ENCODE measurements at regions of chr3 and their contacts with region 1.

Region 1: GRCh38 chr3:132245552-132246142 is 71.6 kb upstream of the ACP3 start:
- DNase-seq: no peak
- ATAC-seq: no peak
- H3K4me3 ChIP-seq: no peak overlapping the region
- H3K27ac ChIP-seq: no peak overlapping the region
- H3K4me1 ChIP-seq: peaks cover 0 to 6% (median 0%) of the 10 kb centered on the region in 9 donors
- H3K27me3 ChIP-seq: peaks cover 0 to 10% (median 5%) of the 10 kb centered on the region in 7 donors
- CTCF ChIP-seq: no peak

Region 2: GRCh38 chr3:130787422-130788068 is 1458.1 kb before region 1 on chr3:
- intact Hi-C with region 1: no loop called
- DNase-seq: no peak
- ATAC-seq: no peak
- H3K4me3 ChIP-seq: no peak overlapping the region
- H3K27ac ChIP-seq: no peak overlapping the region
- H3K4me1 ChIP-seq: peaks cover 0 to 9% (median 0%) of the 10 kb centered on the region in 9 donors
- H3K27me3 ChIP-seq: no peaks in the 10 kb centered on the region
- CTCF ChIP-seq: no peak

Region 3: GRCh38 chr3:132164469-132165092 is 81.1 kb before region 1 on chr3:
- intact Hi-C with region 1: no loop called
- DNase-seq: no peak
- ATAC-seq: no peak
- H3K4me3 ChIP-seq: no peak overlapping the region
- H3K27ac ChIP-seq: no peak overlapping the region
- H3K4me1 ChIP-seq: no peaks in the 10 kb centered on the region
- H3K27me3 ChIP-seq: no peaks in the 10 kb centered on the region
- CTCF ChIP-seq: no peak

Region 4: DNA sequence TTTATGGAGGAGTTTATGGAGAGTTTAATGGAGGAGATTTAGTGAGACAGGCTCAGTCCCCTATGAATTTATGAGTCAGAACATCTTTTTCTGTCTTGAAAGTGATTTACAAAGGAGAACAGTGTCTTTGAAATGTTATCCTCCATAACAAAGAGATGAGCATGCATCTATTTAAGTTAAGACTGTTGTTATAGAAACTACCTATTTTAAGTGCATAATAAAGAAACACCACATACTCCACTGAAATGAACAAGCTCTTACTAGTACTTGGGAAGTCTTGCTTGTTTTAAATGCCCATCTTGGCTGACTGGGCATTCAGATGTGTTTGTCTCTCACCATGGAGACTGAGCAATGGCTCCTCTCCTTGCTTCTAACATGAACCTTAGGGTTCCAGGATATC is 47.1 kb before region 1 on chr3:
- intact Hi-C with region 1: no loop called
- DNase-seq: no peak
- ATAC-seq: no peak
- H3K4me3 ChIP-seq: no peak overlapping the region
- H3K27ac ChIP-seq: no peak overlapping the region
- H3K4me1 ChIP-seq: no peaks in the 10 kb centered on the region
- H3K27me3 ChIP-seq: no peaks in the 10 kb centered on the region
- CTCF ChIP-seq: no peak

Region 5: GRCh38 chr3:132284781-132285619 is 39.4 kb after region 1 on chr3:
- intact Hi-C with region 1: loop called in 1 of 10 experiments (anchors 1 kb)
- DNase-seq: peak in 1 of 2 donors; percentile 16
- ATAC-seq: peak in 4 of 8 donors; percentile 39 to 74 (median 51)
- H3K4me3 ChIP-seq: peak overlapping the region in 3 of 10 donors; percentile 8 to 13 (median 11)
- H3K27ac ChIP-seq: peak overlapping the region in 3 of 10 donors; percentile 9 to 88 (median 11)
- H3K4me1 ChIP-seq: peaks cover 0 to 38% (median 0%) of the 10 kb centered on the region in 9 donors
- H3K27me3 ChIP-seq: peaks cover 0 to 6% (median 0%) of the 10 kb centered on the region in 7 donors
- CTCF ChIP-seq: peak in 2 of 9 donors; percentile 20 to 26